Right ventricle myocardium superior (tissue), 1 donor: ENCODE measurements at regions of chr14 and their contacts with region 1.

Region 1: GRCh38 chr14:102096214-102097114 is 9.6 kb upstream of the HSP90AA1 start:
- DNase-seq: peak; percentile 93
- ATAC-seq: peak; percentile 95

Region 2: DNA sequence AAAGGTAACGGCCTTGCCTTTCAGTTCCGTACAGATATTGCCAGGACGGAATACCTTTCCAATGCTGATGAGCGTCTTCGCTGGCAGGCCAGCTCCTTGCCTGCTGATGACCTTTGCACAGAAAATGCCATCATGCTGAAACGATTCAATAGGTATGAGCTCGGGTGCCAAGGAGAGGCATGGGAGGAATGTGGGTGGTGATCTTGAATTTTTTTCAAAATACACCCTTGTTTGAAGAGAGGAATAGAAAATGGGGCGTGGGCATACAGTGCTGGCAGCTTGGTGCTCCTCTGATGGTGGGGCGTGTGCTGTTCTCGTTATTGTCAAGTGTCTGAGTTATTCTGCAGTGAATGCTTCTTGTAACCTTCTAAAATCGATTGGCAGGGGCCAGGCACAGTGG is 62.2 kb before region 1 on chr14:
- intact Hi-C with region 1: no loop called
- DNase-seq: no peak
- ATAC-seq: no peak

Region 3: GRCh38 chr14:102046343-102047278 is 49.9 kb before region 1 on chr14:
- intact Hi-C with region 1: loop called (anchors 5 kb)
- DNase-seq: peak; percentile 89
- ATAC-seq: peak; percentile 88